CD4-positive, alpha-beta memory T cell (primary cell): ENCODE measurements at regions of chr6 and their contacts with region 1.

Region 1: DNA sequence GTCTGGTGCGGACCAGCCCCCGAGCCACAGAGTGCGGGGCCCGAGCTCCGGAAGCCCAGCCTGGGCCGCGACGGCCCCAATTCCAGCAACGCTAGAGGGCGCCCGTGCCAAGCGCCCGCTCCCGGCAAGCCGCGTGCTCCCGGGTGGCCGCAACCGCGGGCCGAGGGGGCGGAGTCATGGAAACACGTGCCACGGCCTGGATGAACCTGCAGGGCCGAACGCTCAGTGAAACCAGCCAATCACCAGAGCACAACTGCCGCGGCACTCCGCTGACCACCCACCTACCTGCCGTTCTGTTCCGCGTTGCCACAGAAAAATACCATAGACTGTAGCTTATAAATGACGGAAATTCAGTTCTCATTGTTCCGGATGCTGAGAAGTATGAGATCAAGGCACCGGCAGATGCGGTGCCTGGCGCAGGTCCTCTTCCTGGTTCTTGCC is 85.7 kb upstream of the FOXC1 start:
- DNase-seq: peak; percentile 75 to 83 (median 77)
- H3K4me3 ChIP-seq: peak overlapping the region in 1 of 2 donors; percentile 20
- H3K4me3 Mint-ChIP-seq: peak overlapping the region; percentile 75 to 83 (median 80)
- H3K27ac ChIP-seq: peak overlapping the region; percentile 36
- H3K27ac Mint-ChIP-seq: peak overlapping the region; percentile 78 to 93 (median 85)
- H3K4me1 ChIP-seq: peaks cover 51% of the 10 kb centered on the region
- H3K4me1 Mint-ChIP-seq: peaks cover 27 to 55% (median 49%) of the 10 kb centered on the region in 4 donors
- H3K27me3 ChIP-seq: no peaks in the 10 kb centered on the region
- H3K27me3 Mint-ChIP-seq: peaks cover 10% of the 10 kb centered on the region in 2 donors

Region 2: GRCh38 chr6:1535295-1535694 is 11.2 kb after region 1 on chr6:
- CTCF ChIA-PET with region 1: interaction called, 59 read pairs
- POLR2A ChIA-PET with region 1: interaction called, 9 read pairs
- intact Hi-C with region 1: no loop called
- DNase-seq: peak; percentile 25 to 59 (median 44)
- H3K4me3 ChIP-seq: no peak overlapping the region
- H3K4me3 Mint-ChIP-seq: peak overlapping the region in 7 of 8 donors; percentile 50 to 83 (median 76)
- H3K27ac ChIP-seq: peak overlapping the region; percentile 19
- H3K27ac Mint-ChIP-seq: peak overlapping the region; percentile 28 to 92 (median 66)
- H3K4me1 ChIP-seq: peaks cover 49% of the 10 kb centered on the region
- H3K4me1 Mint-ChIP-seq: peaks cover 16 to 25% (median 18%) of the 10 kb centered on the region in 4 donors
- H3K27me3 ChIP-seq: no peaks in the 10 kb centered on the region
- H3K27me3 Mint-ChIP-seq: no peaks in the 10 kb centered on the region